AG04449 (cell line): ENCODE measurements at regions of chr5 and their contacts with region 1.

Region 1: DNA sequence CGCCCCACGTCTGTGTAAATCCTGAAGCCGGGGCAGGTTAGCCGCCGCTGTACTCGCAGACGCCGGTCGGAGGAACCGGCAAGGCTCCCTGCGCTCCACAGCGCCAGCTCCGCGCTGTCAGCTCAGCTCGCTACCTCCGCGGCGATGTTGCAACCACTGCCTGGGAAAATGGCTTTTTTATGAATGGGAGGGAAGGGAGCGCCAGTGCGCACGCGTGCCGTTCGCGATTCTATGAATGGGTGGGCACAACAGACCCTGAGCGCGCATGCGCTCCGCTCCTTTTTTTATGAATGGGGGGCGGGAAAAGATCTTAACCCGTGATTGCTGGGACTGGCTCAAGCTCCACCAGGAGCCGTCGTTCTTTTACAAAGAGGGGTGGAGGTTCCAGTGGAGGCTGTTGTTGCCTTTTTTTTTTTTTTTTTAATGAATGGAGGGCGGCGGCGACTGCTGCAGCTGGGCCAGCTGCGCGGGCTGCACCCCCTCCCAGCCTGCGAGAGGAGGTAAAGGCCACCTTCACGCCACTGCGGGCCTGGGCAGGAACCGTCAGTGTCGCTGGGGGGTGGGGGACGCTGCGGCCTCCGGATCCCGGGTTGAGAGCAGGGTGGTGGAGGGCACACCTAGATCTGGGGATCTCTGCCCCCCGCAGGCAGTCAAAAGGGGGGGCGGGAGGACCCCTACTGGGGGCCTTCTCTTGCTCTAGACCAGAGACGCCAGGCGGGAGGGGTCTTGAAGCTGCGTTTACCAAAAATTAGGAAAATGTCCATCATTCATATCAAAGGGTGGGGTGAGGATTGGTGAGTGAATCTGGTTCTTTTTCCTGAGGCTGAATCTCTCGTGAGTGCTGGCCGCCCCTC is at the start of gene SPRY4:
- DNase-seq: peak; percentile 84
- H3K4me3 ChIP-seq: peak within 1 kb of the TSS; percentile 81
- CTCF ChIP-seq: peak; percentile 20

Region 2: GRCh38 chr5:140996060-140996459 is 1329.0 kb before region 1 on chr5:
- CTCF ChIA-PET with region 1: no interaction called
- POLR2A ChIA-PET with region 1: no interaction called
- DNase-seq: no peak
- H3K4me3 ChIP-seq: no peak overlapping the region
- CTCF ChIP-seq: no peak

Region 3: GRCh38 chr5:142151436-142152383 is 173.4 kb before region 1 on chr5:
- CTCF ChIA-PET with region 1: interaction called, 11 read pairs
- POLR2A ChIA-PET with region 1: no interaction called
- DNase-seq: peak; percentile 41
- H3K4me3 ChIP-seq: no peak overlapping the region
- CTCF ChIP-seq: peak; percentile 62

Region 4: DNA sequence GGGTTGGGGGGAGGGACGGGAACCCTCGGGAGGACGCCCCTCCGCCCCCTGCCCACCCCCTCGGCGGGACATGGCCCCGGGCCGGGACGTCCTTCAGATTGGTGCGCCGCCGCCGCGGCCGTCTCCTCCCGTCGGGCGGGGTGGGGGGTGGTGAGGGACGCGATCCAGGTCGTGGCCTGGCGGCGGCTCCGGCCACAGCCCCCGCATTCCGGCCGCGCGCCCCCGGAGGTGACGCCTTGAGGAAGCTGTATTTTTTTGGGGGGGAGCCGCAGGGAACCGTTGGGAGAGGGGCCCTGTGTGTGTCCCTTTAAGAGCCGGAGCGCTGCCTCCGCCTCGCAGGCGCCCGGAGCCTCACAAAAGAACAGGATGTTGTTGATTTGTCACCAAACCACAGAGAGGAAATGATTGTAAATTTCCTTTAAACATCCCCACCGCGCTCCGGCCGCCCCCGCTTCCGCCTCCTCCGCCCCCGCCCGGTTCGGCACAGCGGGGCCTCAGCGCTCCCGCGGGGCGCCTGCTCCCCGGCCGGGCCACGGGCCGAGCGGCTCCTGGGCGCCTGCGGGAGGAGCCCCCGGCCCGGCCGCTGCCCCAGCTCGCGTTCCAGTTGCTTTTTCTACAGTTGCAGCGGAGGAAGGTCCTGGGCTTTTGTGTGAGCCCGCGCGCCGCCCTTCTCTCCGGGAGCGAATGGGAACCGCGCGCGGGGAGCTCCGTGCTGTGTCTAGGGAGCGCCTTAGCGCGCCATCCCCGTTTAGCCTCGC is 31.8 kb after region 1 on chr5:
- CTCF ChIA-PET with region 1: interaction called, 4 read pairs
- POLR2A ChIA-PET with region 1: interaction called, 22 read pairs
- DNase-seq: no peak
- H3K4me3 ChIP-seq: peak overlapping the region; percentile 61
- CTCF ChIP-seq: no peak

Region 5: GRCh38 chr5:142492781-142493281 is 167.7 kb after region 1 on chr5:
- CTCF ChIA-PET with region 1: no interaction called
- POLR2A ChIA-PET with region 1: no interaction called
- DNase-seq: no peak
- H3K4me3 ChIP-seq: no peak overlapping the region
- CTCF ChIP-seq: no peak

Region 6: GRCh38 chr5:142785211-142785610 is 460.1 kb after region 1 on chr5:
- CTCF ChIA-PET with region 1: no interaction called
- POLR2A ChIA-PET with region 1: no interaction called
- DNase-seq: no peak
- H3K4me3 ChIP-seq: no peak overlapping the region
- CTCF ChIP-seq: no peak